Heart right ventricle (tissue), 16 donors: ENCODE measurements at regions of chr5 and their contacts with region 1.

Region 1: DNA sequence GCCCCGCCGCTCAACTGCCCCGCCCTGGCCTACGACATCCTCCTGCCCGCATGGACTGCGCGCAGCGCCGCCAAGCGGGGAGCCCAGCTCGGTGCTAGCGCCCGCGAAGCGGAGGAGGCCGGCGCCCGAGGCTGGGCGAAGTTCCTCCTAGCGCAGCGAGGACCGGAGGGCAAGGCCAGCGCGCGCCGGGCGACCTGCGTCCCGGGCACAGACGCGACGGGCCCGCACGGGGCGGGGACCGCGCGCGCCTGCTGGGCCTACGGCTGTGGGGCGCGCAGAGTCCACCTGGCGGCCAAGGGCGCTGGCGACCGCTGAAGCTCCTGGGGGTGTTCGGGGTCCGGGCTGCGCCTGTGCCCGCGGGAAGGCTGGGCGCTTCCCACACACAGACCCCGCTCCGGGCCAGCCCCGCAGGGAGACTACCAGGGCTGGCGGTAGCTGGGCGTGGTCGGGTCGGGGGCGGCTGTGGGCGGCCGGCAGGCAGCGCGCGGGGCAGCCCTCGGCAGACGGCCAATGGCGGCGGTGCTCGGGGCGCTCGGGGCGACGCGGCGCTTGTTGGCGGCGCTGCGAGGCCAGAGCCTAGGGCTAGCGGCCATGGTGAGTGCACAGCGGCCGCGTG is at the start of gene PCBD2:
- DNase-seq: peak; percentile 91 to 94
- ATAC-seq: peak; percentile 93 to 96 (median 94)
- H3K4me3 ChIP-seq: peak within 1 kb of the TSS; percentile 43 to 93 (median 74)
- H3K27ac ChIP-seq: peak within 1 kb of the TSS; percentile 97 to 100 (median 100)
- H3K4me1 ChIP-seq: peaks cover 0 to 26% (median 6%) of the 10 kb centered on the region in 9 donors
- H3K27me3 ChIP-seq: no peaks in the 10 kb centered on the region
- CTCF ChIP-seq: peak; percentile 78 to 96 (median 92)
- total RNA-seq, gene PCBD2: 15.9 to 36.4 (median 26.8) TPM

Region 2: GRCh38 chr5:134267366-134268018 is 637.2 kb before region 1 on chr5:
- intact Hi-C with region 1: no loop called
- DNase-seq: no peak
- ATAC-seq: no peak
- H3K4me3 ChIP-seq: no peak overlapping the region
- H3K27ac ChIP-seq: no peak overlapping the region
- H3K4me1 ChIP-seq: no peaks in the 10 kb centered on the region
- H3K27me3 ChIP-seq: no peaks in the 10 kb centered on the region
- CTCF ChIP-seq: no peak

Region 3: DNA sequence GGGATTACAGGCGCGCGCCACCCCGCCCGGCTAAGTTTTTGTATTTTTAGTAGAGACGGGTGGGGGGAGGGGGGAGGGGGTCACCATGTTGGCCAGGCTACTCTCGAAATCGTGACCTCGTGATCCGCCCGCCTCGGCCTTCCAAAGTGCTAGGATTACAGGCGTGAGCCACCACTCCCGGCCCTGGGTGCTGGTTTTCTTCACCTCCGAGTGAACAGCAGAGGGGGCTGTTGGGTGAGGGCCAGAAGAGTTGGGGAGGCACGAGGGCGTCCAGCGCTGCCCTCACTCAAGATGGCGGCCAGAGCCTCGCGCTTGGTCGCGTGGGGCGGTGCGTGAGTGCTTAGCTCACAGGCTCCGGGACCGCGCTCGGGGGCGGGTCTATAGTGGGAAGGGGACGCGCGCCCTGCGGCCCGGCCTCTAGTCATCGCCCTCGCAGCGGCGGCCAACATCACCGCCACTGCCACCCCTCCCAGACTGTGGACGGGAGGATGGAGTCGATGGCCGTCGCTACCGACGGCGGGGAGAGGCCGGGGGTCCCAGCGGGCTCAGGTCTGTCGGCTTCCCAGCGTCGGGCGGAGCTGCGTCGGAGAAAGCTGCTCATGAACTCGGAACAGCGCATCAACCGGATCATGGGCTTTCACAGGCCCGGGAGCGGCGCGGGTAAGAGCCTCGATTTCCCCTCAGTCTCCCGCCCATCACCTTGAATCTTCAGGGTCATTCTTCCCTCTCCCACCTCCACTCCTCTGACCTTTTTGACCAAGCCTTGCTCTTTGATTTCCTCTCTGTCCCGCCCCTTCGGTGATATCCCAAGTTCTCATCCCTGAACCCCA is 166.4 kb before region 1 on chr5 and contains the start of gene CAMLG:
- intact Hi-C with region 1: loop called in 6 of 10 experiments (anchors 1 to 10 kb)
- DNase-seq: peak; percentile 98
- ATAC-seq: peak; percentile 99 to 100 (median 100)
- H3K4me3 ChIP-seq: peak within 1 kb of the TSS; percentile 64 to 95 (median 80)
- H3K27ac ChIP-seq: peak within 1 kb of the TSS; percentile 70 to 96 (median 90)
- H3K4me1 ChIP-seq: peaks cover 0 to 38% (median 15%) of the 10 kb centered on the region in 9 donors
- H3K27me3 ChIP-seq: no peaks in the 10 kb centered on the region
- CTCF ChIP-seq: peak; percentile 18 to 78 (median 66)
- total RNA-seq, gene CAMLG: 14.6 to 22.1 (median 18.1) TPM

Region 4: DNA sequence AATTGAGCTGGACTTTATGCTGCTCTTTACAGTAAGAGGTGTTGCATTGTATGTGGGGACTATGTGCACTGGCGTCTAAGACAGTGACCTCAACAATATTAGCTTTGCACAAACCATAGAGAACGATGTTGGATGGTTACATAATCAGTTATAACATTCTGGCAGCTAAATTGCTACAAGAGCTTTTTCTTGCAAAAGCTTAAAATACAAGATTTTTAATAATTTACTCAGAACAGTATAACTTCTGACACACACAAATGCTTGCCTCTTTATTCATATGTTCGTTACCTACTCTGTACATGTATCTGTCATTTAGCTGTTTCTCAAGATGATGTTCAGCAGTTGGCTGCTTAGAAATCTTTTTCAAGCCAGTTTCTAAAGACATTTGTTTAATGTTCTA is 47.3 kb before region 1 on chr5:
- intact Hi-C with region 1: no loop called
- DNase-seq: no peak
- ATAC-seq: no peak
- H3K4me3 ChIP-seq: no peak overlapping the region
- H3K27ac ChIP-seq: no peak overlapping the region
- H3K4me1 ChIP-seq: peaks cover 0 to 28% (median 4%) of the 10 kb centered on the region in 9 donors
- H3K27me3 ChIP-seq: no peaks in the 10 kb centered on the region
- CTCF ChIP-seq: no peak

Region 5: DNA sequence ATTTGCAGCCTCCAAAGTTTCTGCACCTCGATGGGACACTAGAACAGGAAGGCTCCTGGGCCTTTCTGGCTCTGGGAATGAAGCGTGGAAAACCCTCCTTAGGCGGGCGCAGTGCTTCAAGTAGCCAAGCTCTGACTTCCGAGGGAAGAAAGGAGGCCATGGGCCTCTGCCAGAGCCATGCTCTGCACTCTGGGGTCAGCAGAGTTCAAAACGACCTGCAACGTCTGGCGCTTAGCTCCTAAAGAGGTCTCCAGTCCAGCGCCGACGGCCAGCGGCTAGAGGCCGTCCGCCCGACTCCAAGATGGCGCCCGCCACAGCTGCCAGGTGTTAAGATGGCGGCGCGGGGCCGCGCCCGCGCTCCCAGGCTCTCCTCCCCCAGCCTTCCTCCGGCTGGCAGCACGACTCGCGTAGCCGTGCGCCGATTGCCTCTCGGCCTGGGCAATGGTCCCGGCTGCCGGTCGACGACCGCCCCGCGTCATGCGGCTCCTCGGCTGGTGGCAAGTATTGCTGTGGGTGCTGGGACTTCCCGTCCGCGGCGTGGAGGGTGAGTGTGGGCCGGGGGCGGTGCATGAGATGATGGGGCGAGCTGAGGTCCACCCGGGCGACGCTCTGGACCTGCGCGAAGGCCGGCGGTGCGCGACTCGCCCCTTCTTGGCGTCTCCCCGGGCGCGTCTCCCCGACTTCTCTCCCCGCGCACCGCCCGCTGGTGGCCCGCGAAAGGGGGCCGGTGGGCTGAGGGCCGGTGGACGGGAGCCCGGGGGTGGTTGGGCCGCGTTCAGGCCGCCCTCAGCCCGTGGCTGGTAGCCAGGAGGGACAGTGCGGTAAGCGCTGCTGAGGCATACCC is 30.5 kb before region 1 on chr5 and contains the start of gene TXNDC15:
- intact Hi-C with region 1: loop called in 3 of 10 experiments (anchors 1 to 2 kb)
- DNase-seq: peak; percentile 89 to 90
- ATAC-seq: peak; percentile 96 to 98 (median 97)
- H3K4me3 ChIP-seq: peak within 1 kb of the TSS; percentile 64 to 98 (median 86)
- H3K27ac ChIP-seq: peak within 1 kb of the TSS; percentile 92 to 99 (median 96)
- H3K4me1 ChIP-seq: peaks cover 3 to 35% (median 21%) of the 10 kb centered on the region in 9 donors
- H3K27me3 ChIP-seq: no peaks in the 10 kb centered on the region
- CTCF ChIP-seq: no peak
- total RNA-seq, gene TXNDC15: 37.5 to 72.0 (median 51.1) TPM